K562 (cell line): ENCODE measurements at regions of chr4 and their contacts with region 1.

Region 1: DNA sequence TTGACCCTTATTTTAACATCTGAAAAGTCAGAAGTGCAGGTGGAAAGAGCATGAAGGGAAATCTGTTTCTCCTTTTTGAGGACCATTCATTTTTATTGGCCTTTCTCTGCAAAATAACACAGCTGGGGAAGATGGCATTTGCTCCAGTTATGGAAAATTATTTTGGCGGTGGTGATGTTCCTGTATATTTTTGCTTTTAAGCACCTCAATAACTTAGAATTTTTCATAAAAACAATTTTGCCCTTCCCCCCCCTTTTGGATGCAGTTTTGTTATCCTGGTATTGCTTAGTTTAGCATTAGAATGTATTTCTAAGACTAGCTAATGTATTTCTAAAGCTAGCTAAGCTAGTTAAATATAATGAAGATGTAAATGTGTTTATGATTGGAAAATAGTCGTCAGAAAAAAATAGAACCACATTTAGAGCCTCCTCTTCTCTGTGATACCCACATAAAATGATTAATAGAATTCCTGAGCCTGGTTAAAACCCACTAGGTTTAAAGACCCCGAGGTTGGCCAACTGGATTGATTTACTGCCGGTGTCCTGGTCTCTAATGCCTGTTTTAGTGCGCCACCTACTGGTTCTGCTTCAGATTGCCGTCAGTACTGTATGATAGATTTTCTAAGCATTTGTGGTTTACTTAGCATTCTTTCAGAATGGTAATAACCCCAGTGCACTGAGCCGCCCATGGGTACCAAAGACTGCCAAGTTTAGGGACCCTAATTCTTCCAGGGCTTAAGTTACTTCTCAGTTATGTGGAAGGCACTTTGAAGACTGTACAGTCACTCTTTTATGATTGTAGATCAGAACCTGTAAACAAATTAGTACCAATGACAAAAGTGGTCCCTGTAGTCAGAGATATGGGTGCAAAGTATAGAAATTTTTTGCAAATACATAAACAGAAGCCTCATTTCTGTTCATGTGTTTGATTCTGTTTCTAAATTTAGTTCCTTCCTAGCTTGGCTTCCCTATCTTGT is 11.4 kb downstream of the KLF3 start:
- DNase-seq: peak; percentile 45 to 90 (median 61)
- ATAC-seq: peak; percentile 45
- H3K4me3 ChIP-seq: peak overlapping the region; percentile 19; the same call in 1 of the 2 replicates
- H3K27ac ChIP-seq: peak overlapping the region; percentile 80; the same call in 2 of the 3 replicates
- H3K4me1 ChIP-seq: peaks cover 35 to 49% of the 10 kb centered on the region in 2 experiments
- H3K27me3 ChIP-seq: no peaks in the 10 kb centered on the region
- CTCF ChIP-seq: peak; percentile 72 to 92 (median 86)
- EP300 ChIP-seq: peak; percentile 18; the same call in 1 of the 2 replicates
- POLR2A ChIP-seq: no peak
- RAD21 ChIP-seq: peak; percentile 92 to 96

Region 2: GRCh38 chr4:38069271-38069760 is 606.1 kb before region 1 on chr4:
- CTCF ChIA-PET with region 1: no interaction called
- POLR2A ChIA-PET with region 1: interaction called, 5 read pairs
- in situ Hi-C with region 1: no loop called
- intact Hi-C with region 1: loop called (anchors 2 kb)
- DNase-seq: peak; percentile 41 to 78 (median 56)
- ATAC-seq: peak; percentile 96
- H3K4me3 ChIP-seq: no peak overlapping the region
- H3K27ac ChIP-seq: no peak overlapping the region
- H3K4me1 ChIP-seq: peaks cover 7 to 10% of the 10 kb centered on the region in 2 experiments; a peak in 3 of 5 replicates
- H3K27me3 ChIP-seq: no peaks in the 10 kb centered on the region
- CTCF ChIP-seq: peak; percentile 69 to 94 (median 89)
- EP300 ChIP-seq: peak; percentile 48; the same call in 1 of the 2 replicates
- POLR2A ChIP-seq: no peak
- RAD21 ChIP-seq: peak; percentile 89 to 94

Region 3: DNA sequence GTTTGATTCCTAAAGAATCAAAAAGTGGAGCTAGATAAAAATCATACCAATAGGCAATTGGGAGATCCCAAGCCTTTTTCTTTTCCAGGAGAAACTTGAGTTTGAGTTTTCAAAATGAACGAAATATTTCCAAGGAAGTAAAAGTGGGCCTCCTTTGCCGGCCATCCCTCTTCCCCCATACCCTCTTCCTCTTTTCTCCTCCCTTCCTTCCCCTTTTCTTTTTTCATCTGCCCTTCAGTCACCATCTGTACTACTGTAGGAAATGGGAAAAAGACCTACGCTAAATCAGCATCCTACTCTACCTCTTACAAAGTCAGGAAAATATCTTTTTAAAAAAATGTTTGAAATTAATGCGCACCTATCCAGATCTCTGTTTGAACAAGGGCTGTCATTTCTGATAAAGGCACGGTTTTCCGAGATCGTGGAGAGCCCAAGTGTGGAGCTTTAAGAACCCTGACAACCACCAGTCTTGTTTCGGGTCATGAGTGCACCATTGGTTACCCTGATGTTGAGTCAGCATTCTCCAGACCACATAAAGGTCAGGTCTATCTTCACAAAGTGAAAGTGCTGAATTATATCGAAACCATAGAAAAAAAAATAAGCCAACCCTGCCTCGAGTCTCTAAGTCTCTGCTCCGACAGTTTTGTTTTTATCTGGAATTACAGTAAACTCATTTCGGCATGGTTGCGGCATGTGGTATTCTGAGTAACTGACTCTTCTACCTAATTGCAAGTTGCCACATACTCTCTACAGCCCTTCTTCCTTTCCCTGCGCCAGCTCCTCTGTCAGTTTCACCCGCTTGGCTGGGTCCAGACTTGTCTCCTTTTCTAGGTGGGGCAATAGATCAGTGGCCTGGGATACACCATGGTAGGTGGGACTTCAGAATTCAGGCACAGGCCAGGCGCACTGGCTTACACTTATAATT is 151.6 kb before region 1 on chr4:
- CTCF ChIA-PET with region 1: interaction called, 10 read pairs
- POLR2A ChIA-PET with region 1: interaction called, 7 read pairs
- in situ Hi-C with region 1: no loop called
- intact Hi-C with region 1: loop called (anchors 2 kb)
- DNase-seq: peak; percentile 55 to 79 (median 68)
- ATAC-seq: peak; percentile 87
- H3K4me3 ChIP-seq: peak overlapping the region; percentile 2; the same call in 1 of the 2 replicates
- H3K27ac ChIP-seq: peak overlapping the region; percentile 91
- H3K4me1 ChIP-seq: peaks cover 13 to 35% of the 10 kb centered on the region in 2 experiments
- H3K27me3 ChIP-seq: no peaks in the 10 kb centered on the region
- CTCF ChIP-seq: no peak
- EP300 ChIP-seq: peak; percentile 13; the same call in 1 of the 2 replicates
- POLR2A ChIP-seq: no peak
- RAD21 ChIP-seq: no peak

Region 4: GRCh38 chr4:38534344-38535045 is 140.9 kb before region 1 on chr4:
- CTCF ChIA-PET with region 1: no interaction called
- POLR2A ChIA-PET with region 1: interaction called, 7 read pairs
- in situ Hi-C with region 1: loop called (anchors 5 kb)
- intact Hi-C with region 1: loop called (anchors 2 kb)
- DNase-seq: no peak
- ATAC-seq: no peak
- H3K4me3 ChIP-seq: no peak overlapping the region
- H3K27ac ChIP-seq: no peak overlapping the region
- H3K4me1 ChIP-seq: peaks cover 4 to 14% of the 10 kb centered on the region in 2 experiments
- H3K27me3 ChIP-seq: no peaks in the 10 kb centered on the region
- CTCF ChIP-seq: no peak
- EP300 ChIP-seq: no peak
- POLR2A ChIP-seq: no peak
- RAD21 ChIP-seq: no peak

Region 5: GRCh38 chr4:38612646-38613414 is 62.6 kb before region 1 on chr4:
- CTCF ChIA-PET with region 1: no interaction called
- POLR2A ChIA-PET with region 1: no interaction called
- in situ Hi-C with region 1: no loop called
- intact Hi-C with region 1: no loop called
- DNase-seq: no peak
- ATAC-seq: no peak
- H3K4me3 ChIP-seq: no peak overlapping the region
- H3K27ac ChIP-seq: no peak overlapping the region
- H3K4me1 ChIP-seq: peaks cover 6 to 19% of the 10 kb centered on the region in 2 experiments; a peak in 2 of 5 replicates
- H3K27me3 ChIP-seq: no peaks in the 10 kb centered on the region
- CTCF ChIP-seq: no peak
- EP300 ChIP-seq: no peak
- POLR2A ChIP-seq: no peak
- RAD21 ChIP-seq: no peak